AG04450 (cell line): ENCODE measurements at regions of chr10 and their contacts with region 1.

Region 1: DNA sequence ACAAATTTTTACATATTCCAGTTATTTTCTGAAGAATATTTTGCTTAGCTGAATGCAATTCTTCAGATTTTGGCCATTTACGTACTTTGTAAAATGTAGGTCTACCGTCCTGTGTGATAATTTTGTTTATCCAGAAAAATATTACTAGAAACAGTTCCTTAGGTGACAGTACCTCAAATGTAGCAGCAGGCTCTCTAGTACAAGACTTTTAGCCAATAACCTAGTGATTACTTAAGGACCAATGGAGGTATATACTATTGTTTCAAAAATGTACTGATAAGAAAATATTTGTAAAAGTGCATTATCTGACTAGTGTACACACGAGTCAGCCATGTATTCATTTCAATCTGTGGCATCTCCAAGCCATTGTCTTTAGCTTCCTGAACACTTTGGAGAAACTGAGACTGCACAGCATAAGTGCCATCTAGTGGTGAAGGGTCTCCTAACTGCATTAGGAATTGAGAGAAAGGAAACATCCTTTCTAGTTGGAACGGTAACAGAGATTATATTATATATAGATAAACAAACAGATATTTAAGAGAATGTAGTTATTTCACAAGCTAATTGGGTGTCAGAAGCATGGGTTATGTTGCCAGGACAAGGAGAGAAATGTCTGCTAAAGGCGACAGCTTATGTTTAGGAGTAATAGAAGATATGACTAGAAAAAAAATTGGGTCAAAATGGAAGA is 23.7 kb downstream of the RTKN2 start:
- DNase-seq: no peak
- H3K4me3 ChIP-seq: peak overlapping the region; percentile 11; the same call in 1 of the 2 replicates
- H3K27ac ChIP-seq: peak overlapping the region; percentile 32
- H3K27me3 ChIP-seq: no peaks in the 10 kb centered on the region
- CTCF ChIP-seq: peak; percentile 90

Region 2: DNA sequence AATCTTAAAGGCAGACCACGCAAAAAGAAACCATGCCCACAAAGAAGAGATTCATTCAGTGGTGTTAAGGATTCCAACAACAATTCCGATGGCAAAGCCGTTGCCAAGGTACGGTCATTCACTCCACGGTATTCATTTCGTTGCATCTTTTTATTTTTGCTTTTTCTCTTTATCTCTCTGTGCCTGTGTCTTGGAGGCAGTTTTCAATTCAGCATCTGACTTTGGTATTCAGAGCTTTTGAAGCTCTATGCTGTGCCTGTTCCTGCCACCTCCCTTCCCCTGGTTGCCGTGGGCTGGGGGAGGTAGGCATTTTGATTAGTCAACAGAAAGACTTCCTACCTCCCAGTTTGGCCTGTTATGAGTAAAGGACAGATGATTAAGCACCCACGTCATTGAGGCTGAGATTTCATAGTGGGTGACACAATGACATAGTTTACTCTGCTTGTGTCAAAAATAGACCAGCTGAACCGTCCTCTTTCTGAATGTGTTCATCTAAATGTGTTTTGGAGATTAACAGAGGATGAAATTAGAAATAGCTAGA is 194.0 kb before region 1 on chr10:
- CTCF ChIA-PET with region 1: interaction called, 25 read pairs
- POLR2A ChIA-PET with region 1: interaction called, 14 read pairs
- DNase-seq: peak; percentile 66
- H3K4me3 ChIP-seq: peak overlapping the region; percentile 94
- H3K27ac ChIP-seq: peak overlapping the region; percentile 84
- H3K27me3 ChIP-seq: no peaks in the 10 kb centered on the region
- CTCF ChIP-seq: no peak

Region 3: DNA sequence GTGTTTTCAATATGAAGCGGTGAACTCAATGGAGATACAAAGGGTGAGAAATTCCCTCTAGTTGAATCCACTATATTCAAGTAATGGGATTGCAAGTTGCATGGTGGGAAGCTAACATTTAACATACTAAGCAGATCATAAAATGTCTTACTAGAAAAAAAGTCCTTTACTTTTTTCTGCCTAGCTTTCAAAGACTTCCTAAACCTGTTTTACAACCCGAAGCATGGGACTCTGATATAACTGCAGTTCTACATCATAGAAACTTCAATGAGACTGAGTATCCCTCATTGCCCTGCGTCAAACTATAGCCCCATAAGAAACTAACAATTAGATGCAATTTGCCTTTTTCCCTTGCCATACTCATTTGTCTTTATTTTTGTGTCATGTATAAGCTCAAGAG is 156.1 kb before region 1 on chr10:
- CTCF ChIA-PET with region 1: interaction called, 10 read pairs
- POLR2A ChIA-PET with region 1: interaction called, 16 read pairs
- DNase-seq: no peak
- H3K4me3 ChIP-seq: no peak overlapping the region
- H3K27ac ChIP-seq: no peak overlapping the region
- H3K27me3 ChIP-seq: no peaks in the 10 kb centered on the region
- CTCF ChIP-seq: no peak

Region 4: DNA sequence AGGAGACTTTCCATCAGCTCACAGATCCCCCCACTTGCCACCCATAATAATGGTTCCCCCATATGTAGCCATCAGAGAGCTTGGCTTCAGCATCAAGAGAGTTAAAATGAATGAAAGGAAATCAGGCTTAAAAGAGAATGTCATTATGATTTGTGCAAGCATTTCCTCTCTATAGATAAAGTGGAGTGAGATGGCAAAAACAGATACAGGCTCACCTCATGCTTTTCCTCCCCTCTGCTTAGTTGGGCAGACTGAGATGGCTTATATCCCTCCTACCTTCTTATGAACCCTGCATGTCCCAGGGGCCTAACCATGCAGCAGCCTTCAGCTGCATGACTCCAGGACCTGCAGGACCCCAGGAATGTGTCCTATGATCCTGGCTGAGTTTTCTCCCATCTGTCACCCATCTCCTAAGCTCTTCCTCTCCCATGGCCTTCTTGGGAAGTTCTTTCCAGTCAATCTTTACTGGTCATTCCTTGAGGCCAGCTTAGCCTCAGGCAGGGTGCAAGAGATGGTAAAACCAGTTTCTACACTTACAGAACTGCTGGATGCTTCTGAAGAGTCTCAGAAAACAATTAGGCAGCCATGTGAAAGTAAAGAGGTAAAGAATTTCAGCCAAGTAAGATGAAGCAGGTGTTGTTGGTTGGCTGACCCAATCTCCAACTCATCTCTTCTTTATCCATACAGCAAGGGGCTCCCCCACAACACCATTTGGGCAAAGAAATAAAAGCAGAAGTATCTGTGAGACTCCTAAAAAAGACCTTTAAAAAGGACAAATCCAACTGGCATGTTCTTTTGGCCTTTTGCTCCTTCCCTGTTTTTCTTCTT is 136.0 kb before region 1 on chr10:
- CTCF ChIA-PET with region 1: interaction called, 16 read pairs
- POLR2A ChIA-PET with region 1: no interaction called
- DNase-seq: no peak
- H3K4me3 ChIP-seq: no peak overlapping the region
- H3K27ac ChIP-seq: no peak overlapping the region
- H3K27me3 ChIP-seq: no peaks in the 10 kb centered on the region
- CTCF ChIP-seq: no peak

Region 5: DNA sequence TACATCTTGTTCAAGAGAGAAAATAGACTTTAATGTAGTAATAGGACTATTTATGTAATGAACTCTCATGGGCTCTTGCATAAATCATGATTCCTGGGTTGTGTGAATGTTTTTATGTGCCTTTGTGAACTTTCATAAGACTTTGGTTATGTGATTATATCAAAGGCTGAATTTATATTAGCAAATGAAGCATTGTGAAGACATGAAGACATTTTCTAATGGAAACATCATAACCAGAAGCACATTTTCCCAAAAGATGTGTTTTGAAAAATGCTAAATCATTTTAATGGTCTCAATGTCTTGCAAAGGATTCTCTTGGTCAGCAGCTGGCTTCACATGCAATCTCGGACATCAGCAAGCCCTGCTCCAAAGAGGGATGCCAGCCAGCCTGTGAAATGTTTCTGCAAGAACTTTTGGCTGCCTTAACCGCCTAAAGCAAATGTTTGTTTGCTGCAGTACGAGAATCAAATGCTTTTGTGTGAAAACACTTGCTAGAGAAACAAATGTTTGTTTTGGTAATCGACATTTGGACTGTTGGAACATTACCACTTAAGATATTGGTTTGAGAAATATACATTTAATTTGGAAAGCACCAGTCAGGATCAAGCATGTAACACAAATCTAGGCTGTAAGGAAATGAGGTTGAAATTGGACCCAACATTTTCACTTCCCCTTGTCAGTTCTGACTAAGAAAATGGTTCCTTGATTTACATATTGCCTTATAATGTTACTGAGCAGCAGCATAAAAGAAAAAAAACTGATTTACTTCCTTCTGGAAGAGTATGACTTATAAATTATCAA is 78.4 kb before region 1 on chr10:
- CTCF ChIA-PET with region 1: no interaction called
- POLR2A ChIA-PET with region 1: no interaction called
- DNase-seq: peak; percentile 43
- H3K4me3 ChIP-seq: no peak overlapping the region
- H3K27ac ChIP-seq: no peak overlapping the region
- H3K27me3 ChIP-seq: no peaks in the 10 kb centered on the region
- CTCF ChIP-seq: no peak

Region 6: DNA sequence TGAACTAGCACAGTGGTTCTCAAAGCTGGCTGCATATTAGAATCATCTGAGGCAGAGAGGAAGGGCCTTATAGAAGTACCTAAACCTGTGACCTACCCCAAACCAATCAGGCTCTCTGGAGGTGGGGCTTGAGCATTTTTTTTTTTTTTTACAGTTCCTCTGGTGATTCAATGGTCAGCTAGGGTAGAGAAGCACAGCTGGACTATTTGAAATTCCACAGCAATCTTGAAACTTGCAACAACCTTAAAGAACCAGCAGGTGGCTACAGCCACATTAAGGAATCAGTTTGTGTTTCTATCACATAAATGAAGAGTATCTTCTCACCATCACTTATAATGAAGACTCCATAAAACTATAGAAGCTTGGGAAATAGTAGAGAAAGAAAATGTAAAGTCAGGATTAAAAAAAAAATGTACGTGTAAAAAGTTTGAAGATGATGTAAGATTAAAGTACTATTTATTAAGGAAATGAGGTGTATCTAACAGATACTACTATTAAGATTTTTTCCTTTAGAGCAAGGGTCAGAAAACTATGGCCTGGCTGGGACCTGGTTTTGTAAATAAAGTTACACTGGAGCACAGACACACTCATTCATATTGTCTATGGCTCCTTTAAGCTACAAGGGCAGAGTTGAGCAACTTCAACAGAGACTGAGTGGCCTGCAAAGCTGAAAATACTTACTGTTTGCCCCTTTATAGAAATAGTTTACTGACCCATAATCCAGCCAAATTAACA is 19.9 kb after region 1 on chr10:
- CTCF ChIA-PET with region 1: interaction called, 21 read pairs
- POLR2A ChIA-PET with region 1: no interaction called
- DNase-seq: peak; percentile 70
- H3K4me3 ChIP-seq: no peak overlapping the region
- H3K27ac ChIP-seq: no peak overlapping the region
- H3K27me3 ChIP-seq: no peaks in the 10 kb centered on the region
- CTCF ChIP-seq: peak; percentile 73

Region 7: DNA sequence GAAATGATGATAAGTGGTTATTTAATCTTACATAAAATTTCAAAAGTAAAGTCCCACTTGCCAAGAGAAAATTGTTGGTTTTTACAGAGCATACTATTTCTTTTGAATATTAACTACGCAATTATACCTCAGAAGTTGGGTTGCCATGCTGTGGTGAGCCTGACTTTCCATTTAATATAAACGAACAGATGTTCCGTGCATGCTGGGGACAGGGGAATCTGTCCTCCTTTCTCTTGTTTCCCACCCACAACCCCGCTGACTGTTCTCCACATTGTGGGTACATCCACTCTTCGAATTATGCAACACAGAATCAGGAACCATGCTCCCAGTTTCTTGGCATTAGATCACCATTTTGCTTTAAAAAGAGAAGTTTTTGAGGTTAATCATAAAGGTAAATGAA is 52.9 kb after region 1 on chr10:
- CTCF ChIA-PET with region 1: no interaction called
- POLR2A ChIA-PET with region 1: no interaction called
- DNase-seq: no peak
- H3K4me3 ChIP-seq: no peak overlapping the region
- H3K27ac ChIP-seq: no peak overlapping the region
- H3K27me3 ChIP-seq: peaks cover 3% of the 10 kb centered on the region
- CTCF ChIP-seq: no peak

Region 8: DNA sequence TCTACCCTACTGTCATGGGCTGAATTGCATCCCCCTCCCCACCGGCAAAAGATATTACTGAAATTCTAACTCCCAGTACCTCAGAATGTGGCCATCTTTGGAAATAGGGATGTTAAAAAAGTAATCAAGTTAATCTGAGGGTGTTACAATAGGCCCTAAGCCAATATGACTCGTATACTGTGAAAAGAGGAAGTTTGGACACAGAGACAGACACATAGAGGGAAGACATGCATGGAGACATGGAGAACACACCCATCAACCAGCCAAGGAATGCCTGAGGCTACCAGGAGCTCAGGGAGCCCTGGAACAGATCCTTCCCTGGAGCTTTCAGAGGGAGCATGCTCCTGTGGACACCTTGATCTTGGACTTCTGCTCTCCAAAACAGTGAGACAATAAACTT is 421.4 kb after region 1 on chr10:
- CTCF ChIA-PET with region 1: no interaction called
- POLR2A ChIA-PET with region 1: no interaction called
- DNase-seq: no peak
- H3K4me3 ChIP-seq: no peak overlapping the region
- H3K27ac ChIP-seq: no peak overlapping the region
- H3K27me3 ChIP-seq: no peaks in the 10 kb centered on the region
- CTCF ChIP-seq: no peak